Transverse colon (tissue), 4 donors: ENCODE measurements at regions of chr10 and their contacts with region 1.

Region 1: DNA sequence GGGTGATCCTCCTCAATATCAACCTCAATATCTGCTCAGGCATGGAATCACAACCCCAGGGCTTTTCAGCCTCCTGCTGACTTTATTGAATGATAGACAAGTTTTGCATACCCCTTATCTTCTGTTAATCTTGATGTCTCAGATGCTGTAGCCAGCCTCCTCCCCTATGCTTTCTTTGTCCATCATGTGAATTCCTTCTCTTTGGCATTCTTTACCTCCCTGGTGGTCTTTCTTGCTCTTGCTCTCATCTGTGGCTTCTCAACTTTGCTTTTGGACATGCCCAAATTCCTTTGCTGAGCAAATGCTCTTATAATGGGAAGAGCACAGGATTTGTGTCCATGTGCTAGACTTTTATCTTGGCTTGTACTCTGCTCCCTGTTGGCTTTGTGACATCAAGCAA is 73.4 kb upstream of the FAM13C start:
- DNase-seq: no peak
- H3K4me3 ChIP-seq: no peak overlapping the region
- H3K27ac ChIP-seq: no peak overlapping the region
- H3K4me1 ChIP-seq: peaks cover 0 to 3% (median 0%) of the 10 kb centered on the region in 4 donors
- H3K27me3 ChIP-seq: no peaks in the 10 kb centered on the region
- CTCF ChIP-seq: no peak
- EP300 ChIP-seq: no peak
- POLR2A ChIP-seq: no peak

Region 2: GRCh38 chr10:58464956-58465355 is 970.8 kb before region 1 on chr10:
- in situ Hi-C with region 1: no loop called
- intact Hi-C with region 1: loop called (anchors 5 kb)
- DNase-seq: no peak
- H3K4me3 ChIP-seq: no peak overlapping the region
- H3K27ac ChIP-seq: no peak overlapping the region
- H3K4me1 ChIP-seq: peaks cover 0 to 7% (median 0%) of the 10 kb centered on the region in 4 donors
- H3K27me3 ChIP-seq: no peaks in the 10 kb centered on the region
- CTCF ChIP-seq: no peak
- EP300 ChIP-seq: no peak
- POLR2A ChIP-seq: no peak

Region 3: DNA sequence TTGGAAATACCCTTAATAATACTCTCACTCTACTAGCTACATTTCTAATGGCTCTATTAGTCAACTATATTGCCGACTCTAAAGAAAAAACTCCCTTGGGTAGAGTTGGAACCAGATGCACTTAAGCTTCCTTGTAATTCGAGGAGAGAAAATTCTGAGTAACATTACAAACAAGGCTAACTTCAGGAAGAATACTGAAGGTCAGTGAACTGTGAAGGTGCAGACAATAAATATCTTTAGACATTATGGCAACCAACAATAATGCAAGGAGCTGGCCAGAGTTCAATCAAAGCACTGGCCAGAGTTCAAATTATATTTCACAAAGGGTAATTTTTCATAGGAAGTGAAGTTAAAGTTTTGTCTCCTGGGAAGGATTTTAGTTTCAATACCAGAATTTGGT is 358.2 kb after region 1 on chr10:
- in situ Hi-C with region 1: no loop called
- intact Hi-C with region 1: no loop called
- DNase-seq: no peak
- H3K4me3 ChIP-seq: no peak overlapping the region
- H3K27ac ChIP-seq: no peak overlapping the region
- H3K4me1 ChIP-seq: no peaks in the 10 kb centered on the region
- H3K27me3 ChIP-seq: no peaks in the 10 kb centered on the region
- CTCF ChIP-seq: no peak
- EP300 ChIP-seq: no peak
- POLR2A ChIP-seq: no peak